A549 (cell line): ENCODE measurements at regions of chr1 and their contacts with region 1.

Region 1: DNA sequence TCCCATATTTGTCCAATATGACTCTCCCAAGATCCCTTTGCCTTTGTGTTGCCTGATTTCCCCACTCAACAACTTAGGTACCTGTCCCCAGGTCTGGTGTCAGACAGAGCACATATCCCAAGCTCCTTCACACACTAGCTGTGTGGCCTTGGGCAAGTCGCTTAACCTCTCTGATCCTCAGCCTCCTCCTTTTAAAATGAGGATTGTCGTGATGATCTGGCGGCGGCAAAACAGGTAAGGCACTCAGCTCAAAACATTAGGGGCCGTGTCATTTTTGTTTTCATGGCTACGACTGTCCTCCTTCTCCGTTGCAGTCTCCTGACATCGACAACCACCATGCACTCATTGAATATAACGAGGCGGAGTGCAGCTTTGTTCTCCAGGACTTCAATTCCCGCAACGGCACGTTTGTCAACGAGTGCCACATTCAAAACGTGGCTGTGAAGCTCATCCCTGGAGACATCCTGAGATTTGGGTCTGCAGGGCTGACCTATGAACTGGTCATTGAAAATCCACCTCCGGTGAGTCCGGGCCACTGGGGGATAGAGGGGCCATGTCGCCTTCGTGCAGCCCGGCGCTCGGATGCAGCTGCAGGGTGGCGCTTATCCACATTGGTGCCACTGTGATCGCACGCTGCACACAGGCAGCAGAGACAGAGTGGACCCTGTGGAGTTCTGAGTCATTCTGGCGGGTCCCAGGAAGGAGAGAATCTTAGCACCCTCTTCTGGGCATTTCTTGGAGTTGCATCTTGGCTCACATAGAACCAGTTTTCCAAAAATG is 25.2 kb downstream of the FHAD1 start:
- DNase-seq: peak; percentile 71
- ATAC-seq: peak; percentile 97 to 98
- H3K4me3 ChIP-seq: no peak overlapping the region
- H3K27ac ChIP-seq: peak overlapping the region; percentile 19 to 81; a peak in 4 of 6 replicates
- H3K4me1 ChIP-seq: peaks cover 5% of the 10 kb centered on the region; the same call in 1 of the 3 replicates
- CTCF ChIP-seq: peak; percentile 75
- EP300 ChIP-seq: no peak
- POLR2A ChIP-seq: no peak
- RAD21 ChIP-seq: peak; percentile 89 to 90

Region 2: DNA sequence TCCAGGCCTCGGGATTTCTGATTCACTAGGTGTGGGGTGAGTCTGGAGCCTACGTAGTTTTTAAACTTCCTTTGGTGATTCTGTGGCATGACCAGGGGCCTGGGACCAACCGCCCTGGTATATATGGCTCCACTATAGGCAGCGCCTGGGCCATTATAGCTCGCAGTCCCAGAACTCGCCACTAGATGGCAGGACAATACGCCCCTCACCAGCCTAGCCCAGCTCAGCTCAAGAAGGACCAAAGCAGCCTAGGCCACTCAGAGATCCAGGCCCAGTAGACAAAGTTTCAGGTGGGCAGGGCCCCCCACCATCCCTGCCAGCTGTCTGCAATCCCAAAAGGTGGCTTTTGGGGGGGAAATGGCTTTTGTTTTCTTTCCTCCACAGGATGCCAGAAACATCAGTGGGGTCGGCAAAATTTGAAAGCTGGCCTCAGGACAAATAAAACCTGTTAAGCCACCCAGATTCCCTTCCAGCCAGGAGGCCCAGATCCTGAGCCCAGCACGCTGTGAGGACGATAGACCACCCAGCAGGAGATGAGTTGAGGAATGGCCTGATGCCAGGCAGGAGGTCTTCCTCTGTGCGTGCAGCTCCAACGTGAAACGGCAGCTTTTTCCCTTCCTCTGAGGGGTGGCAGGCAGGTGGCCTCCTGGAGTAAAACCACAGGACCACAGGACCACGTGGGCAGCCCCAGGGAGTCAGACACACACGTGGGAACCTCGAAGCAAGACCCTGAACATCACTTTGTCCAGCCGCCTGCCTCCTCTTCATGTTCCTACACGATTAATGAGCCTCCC is 143.5 kb before region 1 on chr1:
- CTCF ChIA-PET with region 1: interaction called, 82 read pairs
- POLR2A ChIA-PET with region 1: no interaction called
- DNase-seq: peak; percentile 67 to 70
- ATAC-seq: peak; percentile 97 to 100
- H3K4me3 ChIP-seq: no peak overlapping the region
- H3K27ac ChIP-seq: peak overlapping the region in 1 of 2 experiments; percentile 51; a peak in 3 of 6 replicates
- H3K4me1 ChIP-seq: no peaks in the 10 kb centered on the region
- CTCF ChIP-seq: peak; percentile 72
- EP300 ChIP-seq: no peak
- POLR2A ChIP-seq: no peak
- RAD21 ChIP-seq: peak; percentile 80 to 87

Region 3: GRCh38 chr1:15168479-15168878 is 103.7 kb before region 1 on chr1:
- CTCF ChIA-PET with region 1: interaction called, 15 read pairs
- POLR2A ChIA-PET with region 1: interaction called, 3 read pairs
- DNase-seq: peak in 1 of 2 experiments; percentile 86
- ATAC-seq: peak; percentile 94 to 97
- H3K4me3 ChIP-seq: no peak overlapping the region
- H3K27ac ChIP-seq: peak overlapping the region; percentile 80 to 87
- H3K4me1 ChIP-seq: peaks cover 73% of the 10 kb centered on the region
- CTCF ChIP-seq: peak; percentile 19; the same call in 1 of the 3 replicates
- EP300 ChIP-seq: peak in 1 of 2 experiments; percentile 32; a peak in 1 of 5 replicates
- POLR2A ChIP-seq: no peak
- RAD21 ChIP-seq: peak in 1 of 2 experiments; percentile 15; a peak in 2 of 5 replicates

Region 4: DNA sequence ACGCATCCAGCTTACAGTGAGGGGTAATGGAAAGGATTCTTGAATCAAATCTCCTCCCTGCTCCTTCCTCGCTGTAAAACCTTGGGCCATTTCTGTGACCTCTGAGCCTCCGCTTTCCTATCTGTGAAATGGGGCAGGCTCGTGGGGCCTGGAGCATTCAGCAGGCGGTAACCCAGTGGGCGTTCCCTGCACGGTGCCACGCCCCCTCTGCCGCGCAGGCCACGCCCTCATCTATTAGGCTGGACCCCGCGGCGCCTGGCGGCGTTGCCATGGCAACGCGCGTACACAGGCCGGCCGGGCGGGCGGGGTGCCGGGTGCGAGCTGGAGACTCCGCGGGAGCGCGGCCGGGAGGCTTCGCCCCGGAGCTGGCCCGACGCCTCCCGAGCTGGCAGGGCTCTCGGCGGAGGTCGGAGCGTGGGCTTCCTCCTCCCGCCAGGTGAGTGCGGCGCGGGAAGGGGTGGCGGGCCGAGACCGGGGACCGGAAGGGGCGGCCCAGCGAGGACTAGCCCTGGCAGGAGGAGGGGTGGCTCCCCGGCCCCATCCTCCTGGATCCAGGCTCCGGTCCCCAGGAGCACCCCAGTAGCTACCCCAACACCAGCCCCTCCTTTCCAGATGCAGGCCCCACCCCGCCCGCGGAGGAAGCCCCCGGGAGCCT is 25.1 kb before region 1 on chr1 and contains the start of gene FHAD1:
- CTCF ChIA-PET with region 1: interaction called, 11 read pairs
- POLR2A ChIA-PET with region 1: no interaction called
- DNase-seq: peak; percentile 59 to 78
- ATAC-seq: peak; percentile 88 to 92
- H3K4me3 ChIP-seq: peak within 1 kb of the TSS; percentile 63
- H3K27ac ChIP-seq: peak within 1 kb of the TSS; percentile 75 to 86
- H3K4me1 ChIP-seq: no peaks in the 10 kb centered on the region
- CTCF ChIP-seq: no peak
- EP300 ChIP-seq: no peak
- POLR2A ChIP-seq: no peak
- RAD21 ChIP-seq: no peak
- polyA plus RNA-seq, gene FHAD1: 0.28 and 0.31 TPM in 2 replicates

Region 5: DNA sequence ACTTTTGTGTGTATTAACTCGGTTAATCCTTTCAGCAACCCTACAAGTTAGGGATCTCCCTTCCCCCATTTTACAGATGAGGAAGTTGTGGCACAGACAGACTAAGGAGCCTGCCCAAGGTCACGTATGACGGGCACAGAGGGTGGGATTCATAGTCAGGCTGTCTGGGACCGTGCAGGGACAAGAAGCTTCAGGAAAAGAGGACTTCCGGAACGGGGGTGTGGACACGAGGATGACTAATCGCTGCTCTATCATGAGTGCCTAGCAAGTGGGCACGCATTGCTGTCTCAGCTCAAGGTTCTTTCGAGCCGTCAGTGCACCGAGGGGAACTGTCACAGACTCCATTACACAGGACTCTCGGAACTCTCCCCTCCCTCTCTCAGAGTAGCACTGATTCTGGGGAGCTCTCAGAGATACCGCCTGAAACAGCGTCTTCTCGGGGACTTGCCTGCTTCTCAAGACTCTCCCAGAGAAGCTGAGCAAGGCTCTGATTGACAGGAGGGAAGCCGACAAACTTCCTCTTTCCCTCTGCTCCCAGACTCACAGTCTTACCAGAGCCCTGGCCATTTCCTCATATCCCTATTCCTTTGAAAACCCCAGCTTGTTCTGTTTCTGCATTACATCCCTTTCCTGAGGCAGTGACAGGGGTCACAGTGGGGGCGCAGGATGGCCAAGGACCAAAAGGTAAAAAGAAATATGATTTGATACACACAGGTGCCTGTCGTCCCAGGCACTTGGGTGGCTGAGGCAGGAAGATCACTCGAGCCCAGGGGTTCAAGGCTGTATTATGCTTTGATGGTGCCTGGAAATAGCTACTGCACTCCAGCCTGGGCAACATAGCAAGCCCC is 10.8 kb before region 1 on chr1:
- CTCF ChIA-PET with region 1: interaction called, 25 read pairs
- POLR2A ChIA-PET with region 1: no interaction called
- DNase-seq: peak in 1 of 2 experiments; percentile 24
- ATAC-seq: peak; percentile 74 to 83
- H3K4me3 ChIP-seq: no peak overlapping the region
- H3K27ac ChIP-seq: peak overlapping the region; percentile 29 to 81
- H3K4me1 ChIP-seq: peaks cover 13% of the 10 kb centered on the region
- CTCF ChIP-seq: no peak
- EP300 ChIP-seq: no peak
- POLR2A ChIP-seq: no peak
- RAD21 ChIP-seq: no peak

Region 6: GRCh38 chr1:15283526-15283925 is 11.3 kb after region 1 on chr1:
- CTCF ChIA-PET with region 1: interaction called, 47 read pairs
- POLR2A ChIA-PET with region 1: no interaction called
- DNase-seq: peak; percentile 66 to 69
- ATAC-seq: peak; percentile 89 to 92
- H3K4me3 ChIP-seq: no peak overlapping the region; the same call in 2 of the 3 replicates
- H3K27ac ChIP-seq: peak overlapping the region; percentile 68 to 83
- H3K4me1 ChIP-seq: peaks cover 37% of the 10 kb centered on the region
- CTCF ChIP-seq: no peak
- EP300 ChIP-seq: no peak
- POLR2A ChIP-seq: no peak
- RAD21 ChIP-seq: no peak

Region 7: GRCh38 chr1:15370781-15371520 is 98.8 kb after region 1 on chr1:
- CTCF ChIA-PET with region 1: no interaction called
- POLR2A ChIA-PET with region 1: no interaction called
- DNase-seq: no peak
- ATAC-seq: no peak
- H3K4me3 ChIP-seq: no peak overlapping the region
- H3K27ac ChIP-seq: peak overlapping the region in 1 of 2 experiments; percentile 28; a peak in 1 of 6 replicates
- H3K4me1 ChIP-seq: peaks cover 18% of the 10 kb centered on the region
- CTCF ChIP-seq: no peak
- EP300 ChIP-seq: no peak
- POLR2A ChIP-seq: no peak
- RAD21 ChIP-seq: no peak

Region 8: GRCh38 chr1:15485636-15486035 is 213.4 kb after region 1 on chr1:
- CTCF ChIA-PET with region 1: no interaction called
- POLR2A ChIA-PET with region 1: no interaction called
- DNase-seq: no peak
- ATAC-seq: no peak
- H3K4me3 ChIP-seq: no peak overlapping the region
- H3K27ac ChIP-seq: no peak overlapping the region
- H3K4me1 ChIP-seq: no peaks in the 10 kb centered on the region
- CTCF ChIP-seq: no peak
- EP300 ChIP-seq: no peak
- POLR2A ChIP-seq: no peak
- RAD21 ChIP-seq: no peak